A549 (cell line): ENCODE measurements at regions of chr5 and their contacts with region 1.

Region 1: GRCh38 chr5:160021831-160022446 is 13.0 kb downstream of the TTC1 start:
- DNase-seq: peak; percentile 58 to 61
- ATAC-seq: peak; percentile 93 to 97
- H3K4me3 ChIP-seq: no peak overlapping the region
- H3K27ac ChIP-seq: no peak overlapping the region
- H3K4me1 ChIP-seq: no peaks in the 10 kb centered on the region
- CTCF ChIP-seq: peak; percentile 80
- EP300 ChIP-seq: no peak
- POLR2A ChIP-seq: no peak
- RAD21 ChIP-seq: peak; percentile 77 to 81

Region 2: GRCh38 chr5:160008877-160009590 is 12.9 kb before region 1 on chr5 and contains the start of gene TTC1:
- CTCF ChIA-PET with region 1: interaction called, 33 read pairs
- POLR2A ChIA-PET with region 1: interaction called, 4 read pairs
- DNase-seq: peak; percentile 94 to 99
- ATAC-seq: peak; percentile 99
- H3K4me3 ChIP-seq: peak within 1 kb of the TSS; percentile 94
- H3K27ac ChIP-seq: peak within 1 kb of the TSS; percentile 85 to 90
- H3K4me1 ChIP-seq: peaks cover 18% of the 10 kb centered on the region
- CTCF ChIP-seq: no peak
- EP300 ChIP-seq: no peak
- POLR2A ChIP-seq: peak; percentile 83
- RAD21 ChIP-seq: no peak
- polyA plus RNA-seq, gene TTC1: 48.6 and 64.9 TPM in 2 replicates

Region 3: GRCh38 chr5:160054831-160055230 is 32.9 kb after region 1 on chr5:
- CTCF ChIA-PET with region 1: interaction called, 15 read pairs
- POLR2A ChIA-PET with region 1: no interaction called
- DNase-seq: peak; percentile 42 to 58
- ATAC-seq: peak; percentile 90 to 92
- H3K4me3 ChIP-seq: no peak overlapping the region
- H3K27ac ChIP-seq: 0 out of 6 replicates have a peak overlapping the region, but pooled peaks of 1 of the 2 experiments have one; percentile 6
- H3K4me1 ChIP-seq: peaks cover 19% of the 10 kb centered on the region
- CTCF ChIP-seq: no peak
- EP300 ChIP-seq: no peak
- POLR2A ChIP-seq: no peak
- RAD21 ChIP-seq: no peak

Region 4: GRCh38 chr5:160082614-160083500 is 60.9 kb after region 1 on chr5:
- CTCF ChIA-PET with region 1: interaction called, 12 read pairs
- POLR2A ChIA-PET with region 1: no interaction called
- DNase-seq: peak in 1 of 2 experiments; percentile 42
- ATAC-seq: peak; percentile 33 to 78; a peak in 5 of 6 replicates
- H3K4me3 ChIP-seq: no peak overlapping the region
- H3K27ac ChIP-seq: peak overlapping the region; percentile 46 to 77
- H3K4me1 ChIP-seq: peaks cover 28% of the 10 kb centered on the region
- CTCF ChIP-seq: no peak
- EP300 ChIP-seq: no peak
- POLR2A ChIP-seq: no peak
- RAD21 ChIP-seq: no peak

Region 5: GRCh38 chr5:160303690-160304089 is 281.8 kb after region 1 on chr5:
- CTCF ChIA-PET with region 1: no interaction called
- POLR2A ChIA-PET with region 1: no interaction called
- DNase-seq: no peak
- ATAC-seq: no peak
- H3K4me3 ChIP-seq: no peak overlapping the region
- H3K27ac ChIP-seq: no peak overlapping the region
- H3K4me1 ChIP-seq: no peaks in the 10 kb centered on the region
- CTCF ChIP-seq: no peak
- EP300 ChIP-seq: no peak
- POLR2A ChIP-seq: no peak
- RAD21 ChIP-seq: no peak

Region 6: GRCh38 chr5:160390787-160391696 is 369.1 kb after region 1 on chr5:
- CTCF ChIA-PET with region 1: interaction called, 50 read pairs
- POLR2A ChIA-PET with region 1: no interaction called
- DNase-seq: peak in 1 of 2 experiments; percentile 32
- ATAC-seq: peak; percentile 47 to 69; a peak in 3 of 6 replicates
- H3K4me3 ChIP-seq: no peak overlapping the region
- H3K27ac ChIP-seq: no peak overlapping the region
- H3K4me1 ChIP-seq: no peaks in the 10 kb centered on the region
- CTCF ChIP-seq: peak; percentile 75
- EP300 ChIP-seq: no peak
- POLR2A ChIP-seq: no peak
- RAD21 ChIP-seq: peak; percentile 73 to 79